ENCODE measurements at regions of chr9 and their contacts with region 1.

Region 1: DNA sequence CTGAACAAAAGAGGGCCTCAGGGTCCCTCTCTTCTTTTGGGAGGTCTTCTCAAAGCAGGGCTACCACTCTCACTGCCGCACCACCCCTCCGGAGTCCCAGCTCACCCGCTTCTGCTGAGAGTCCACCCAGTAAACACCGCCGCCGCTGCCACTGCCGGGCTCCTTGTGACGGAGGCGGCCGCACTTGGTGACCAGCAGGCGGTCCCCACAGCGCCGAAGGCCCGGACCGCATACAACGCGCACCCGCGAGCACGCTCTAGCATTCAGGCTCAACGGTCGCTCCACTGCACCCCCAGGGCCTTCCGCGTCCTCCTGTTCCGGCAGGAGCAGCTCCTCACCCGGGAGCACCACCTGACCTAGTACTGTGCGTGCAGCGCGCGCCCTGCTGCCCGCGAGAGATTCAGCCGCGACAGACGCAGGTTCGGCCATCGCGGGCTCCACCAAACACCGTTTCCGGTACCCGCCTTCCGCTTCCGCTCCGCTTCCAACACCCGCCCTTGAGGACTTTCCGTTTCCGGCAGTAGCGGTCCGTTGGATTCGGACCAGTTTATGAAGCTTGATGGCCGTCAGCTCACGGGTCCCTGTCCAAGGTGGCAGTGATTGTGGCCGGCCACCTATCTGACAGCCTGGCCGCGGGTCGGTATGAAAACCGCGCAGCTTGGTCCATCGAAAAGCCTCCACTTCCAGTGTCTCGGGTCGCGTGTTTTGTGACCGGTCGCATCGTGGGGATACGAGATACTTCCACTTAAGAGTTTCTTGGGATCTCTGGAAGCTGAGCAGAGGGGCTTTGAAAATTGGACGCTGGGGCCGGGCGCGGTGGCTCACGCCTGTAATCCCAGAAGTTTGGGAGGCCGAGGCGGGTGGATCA is at the start of gene EXOSC3:
- DNase-seq: peak; percentile 83
- ATAC-seq: peak; percentile 87
- H3K4me3 Mint-ChIP-seq: peak within 1 kb of the TSS; percentile 98
- H3K27ac Mint-ChIP-seq: peak within 1 kb of the TSS; percentile 93
- H3K4me1 Mint-ChIP-seq: peaks cover 35% of the 10 kb centered on the region
- H3K27me3 Mint-ChIP-seq: no peaks in the 10 kb centered on the region
- CTCF ChIP-seq: no peak
- total RNA-seq, gene EXOSC3: 63.8 and 69.9 TPM in 2 replicates

Region 2: DNA sequence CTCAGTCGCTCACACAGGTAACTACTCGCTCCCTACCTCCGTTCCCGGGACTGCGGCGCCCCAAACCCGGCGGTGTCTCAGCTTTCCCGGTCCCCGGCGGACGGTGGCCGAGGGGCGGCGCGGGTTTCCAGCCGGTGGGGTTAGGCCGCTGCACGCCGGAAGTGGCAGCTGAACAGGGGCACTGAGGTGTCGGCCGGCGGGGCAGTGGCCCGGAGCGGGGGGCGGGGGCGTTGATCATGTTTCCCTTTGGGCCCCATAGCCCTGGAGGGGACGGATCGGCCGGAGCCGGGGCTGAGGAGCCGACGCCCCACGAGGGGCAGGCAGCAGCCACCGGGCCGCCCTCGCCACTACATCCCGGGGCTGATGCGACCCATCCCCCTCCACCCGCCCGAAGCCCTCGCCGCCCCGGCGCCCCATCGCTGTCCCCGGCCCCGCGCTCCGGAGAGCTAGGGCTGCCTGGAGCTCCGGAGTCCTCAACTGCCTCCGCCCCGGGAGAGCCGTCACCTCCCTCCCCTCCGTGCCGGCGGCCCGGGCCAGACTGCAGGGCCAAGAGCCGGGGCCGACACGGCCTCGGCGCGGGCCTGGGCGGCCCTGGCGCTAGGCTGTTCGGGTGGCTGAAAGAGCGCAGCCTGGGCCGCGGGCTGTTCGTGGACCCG is 15.9 kb after region 1 on chr9 and contains the start of gene DCAF10:
- CTCF ChIA-PET with region 1: interaction called, 5 read pairs
- POLR2A ChIA-PET with region 1: interaction called, 63 read pairs
- intact Hi-C with region 1: loop called (anchors 1 kb)
- DNase-seq: peak; percentile 96
- ATAC-seq: peak; percentile 81
- H3K4me3 Mint-ChIP-seq: peak within 1 kb of the TSS; percentile 92
- H3K27ac Mint-ChIP-seq: peak within 1 kb of the TSS; percentile 89
- H3K4me1 Mint-ChIP-seq: peaks cover 40% of the 10 kb centered on the region
- H3K27me3 Mint-ChIP-seq: no peaks in the 10 kb centered on the region
- CTCF ChIP-seq: no peak
- total RNA-seq, gene DCAF10: 16.8 and 19.1 TPM in 2 replicates

Measured in activated B cell treated with CpG ODN at 0.5 μM for 24 hours (primary cell).